ENCODE measurements at regions of chr12 and their contacts with region 1.

Region 1: GRCh38 chr12:56688129-56688845 is at the start of gene PTGES3:
- DNase-seq: peak; percentile 99
- H3K4me3 Mint-ChIP-seq: peak within 1 kb of the TSS; percentile 90
- H3K27ac Mint-ChIP-seq: peak within 1 kb of the TSS; percentile 99
- H3K4me1 Mint-ChIP-seq: peaks cover 19% of the 10 kb centered on the region
- H3K27me3 Mint-ChIP-seq: no peaks in the 10 kb centered on the region
- total RNA-seq, gene PTGES3: 289 to 293 TPM

Region 2: DNA sequence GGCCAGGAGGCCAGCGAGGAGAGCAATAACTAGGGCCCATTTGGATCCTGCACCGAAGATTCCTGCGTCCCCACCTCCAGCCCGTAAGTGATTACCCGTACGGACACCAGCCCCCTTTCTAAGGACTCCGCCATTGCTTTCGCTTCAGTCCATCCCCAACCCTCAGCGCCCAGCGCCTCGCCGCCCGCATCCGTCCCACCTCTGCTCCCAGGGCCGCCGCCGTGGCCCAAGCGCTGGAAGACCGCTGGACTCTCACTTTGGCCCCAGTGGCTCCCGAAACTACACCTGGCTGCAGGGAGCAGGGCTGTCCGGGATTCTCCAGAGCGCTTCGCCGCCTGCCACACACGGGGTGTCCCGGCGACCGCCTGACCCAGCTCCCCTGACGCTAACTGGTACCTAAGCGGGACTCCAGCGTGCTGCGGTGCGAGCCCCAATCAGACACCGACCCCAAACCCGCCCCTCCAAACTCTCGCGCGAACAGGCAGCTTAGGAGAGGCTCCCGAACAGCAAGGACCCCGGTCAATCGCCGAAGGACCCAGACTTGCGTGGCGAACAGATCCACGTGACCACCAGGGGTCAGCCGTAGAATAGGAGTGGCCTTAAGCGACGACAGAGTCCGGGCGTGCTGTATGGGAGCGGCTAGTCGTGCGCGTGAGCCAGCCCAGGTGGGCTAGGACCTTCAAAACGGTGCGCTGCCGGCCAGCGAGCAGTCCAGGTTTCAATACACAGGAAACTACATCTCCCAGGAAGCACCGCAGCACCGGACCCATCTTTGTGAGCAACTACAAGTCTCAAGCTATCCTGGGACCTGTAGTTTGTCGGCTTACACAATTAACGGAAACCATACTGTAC is 372.4 kb before region 1 on chr12 and contains the start of gene CNPY2:
- CTCF ChIA-PET with region 1: no interaction called
- intact Hi-C with region 1: loop called (anchors 1 kb)
- DNase-seq: peak; percentile 92
- H3K4me3 Mint-ChIP-seq: peak within 1 kb of the TSS; percentile 97
- H3K27ac Mint-ChIP-seq: peak within 1 kb of the TSS; percentile 97
- H3K4me1 Mint-ChIP-seq: peaks cover 16% of the 10 kb centered on the region
- H3K27me3 Mint-ChIP-seq: no peaks in the 10 kb centered on the region
- total RNA-seq, gene CNPY2: 47.5 to 57.3 TPM

Region 3: GRCh38 chr12:56636675-56637540 is 51.4 kb before region 1 on chr12:
- CTCF ChIA-PET with region 1: interaction called, 5 read pairs
- intact Hi-C with region 1: loop called (anchors 1 kb)
- DNase-seq: peak; percentile 97
- H3K4me3 Mint-ChIP-seq: peak overlapping the region; percentile 86
- H3K27ac Mint-ChIP-seq: peak overlapping the region; percentile 91
- H3K4me1 Mint-ChIP-seq: peaks cover 62% of the 10 kb centered on the region
- H3K27me3 Mint-ChIP-seq: no peaks in the 10 kb centered on the region

Region 4: GRCh38 chr12:56677680-56678079 is 10.6 kb before region 1 on chr12:
- CTCF ChIA-PET with region 1: no interaction called
- intact Hi-C with region 1: loop called (anchors 1 kb)
- DNase-seq: peak; percentile 51
- H3K4me3 Mint-ChIP-seq: no peak overlapping the region
- H3K27ac Mint-ChIP-seq: peak overlapping the region; percentile 75
- H3K4me1 Mint-ChIP-seq: peaks cover 78% of the 10 kb centered on the region
- H3K27me3 Mint-ChIP-seq: no peaks in the 10 kb centered on the region

Region 5: DNA sequence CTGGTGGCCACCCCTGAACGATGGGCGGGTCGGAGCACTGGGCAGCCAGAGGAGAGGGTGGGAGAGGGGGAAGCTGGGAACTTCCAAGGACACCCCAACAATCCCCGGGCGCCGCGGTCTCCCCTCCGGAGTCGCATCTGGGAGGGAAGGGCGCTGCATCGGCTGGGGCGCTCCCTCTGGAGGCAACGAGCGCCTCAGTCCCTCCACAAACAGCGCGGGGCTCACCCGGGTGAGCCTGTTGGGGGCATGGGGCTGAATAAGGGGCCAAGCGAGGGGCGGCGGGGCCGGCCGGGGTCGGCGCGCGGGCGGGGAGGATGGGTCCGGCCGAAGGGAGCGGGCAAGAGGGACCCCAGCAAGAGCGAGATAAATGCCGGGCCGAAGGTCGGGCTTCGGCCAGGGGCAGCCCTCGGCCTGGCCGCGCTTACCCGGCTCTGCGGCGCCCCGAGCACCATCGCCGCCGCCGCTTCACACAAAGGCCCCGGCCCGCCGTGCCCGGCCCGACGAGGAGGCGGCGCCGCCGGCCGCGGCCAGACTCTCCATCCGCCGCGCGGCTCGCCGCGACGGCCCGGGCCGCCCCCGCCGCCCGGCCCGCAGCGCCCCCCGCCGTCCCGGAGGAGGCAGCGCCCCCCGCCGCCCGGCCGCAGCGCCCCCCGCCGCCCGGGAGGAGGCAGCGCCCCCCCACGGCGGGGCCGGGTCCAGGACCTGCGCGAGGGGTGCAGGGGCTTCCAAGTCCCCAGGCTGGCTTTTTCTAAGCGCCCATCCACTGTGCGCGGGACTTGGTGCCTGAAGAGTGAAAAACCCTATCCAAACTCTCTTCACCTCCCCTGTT is 317.9 kb after region 1 on chr12 and contains the start of gene ZBTB39:
- CTCF ChIA-PET with region 1: interaction called, 3 read pairs
- intact Hi-C with region 1: loop called (anchors 5 kb)
- DNase-seq: peak; percentile 59
- H3K4me3 Mint-ChIP-seq: peak within 1 kb of the TSS; percentile 92
- H3K27ac Mint-ChIP-seq: peak within 1 kb of the TSS; percentile 90
- H3K4me1 Mint-ChIP-seq: peaks cover 72% of the 10 kb centered on the region
- H3K27me3 Mint-ChIP-seq: no peaks in the 10 kb centered on the region
- total RNA-seq, gene ZBTB39: 5.1 to 5.5 TPM

Region 6: GRCh38 chr12:57111031-57111734 is 422.9 kb after region 1 on chr12 and contains the start of gene STAT6:
- CTCF ChIA-PET with region 1: no interaction called
- intact Hi-C with region 1: loop called (anchors 1 kb)
- DNase-seq: peak; percentile 92
- H3K4me3 Mint-ChIP-seq: peak within 1 kb of the TSS; percentile 92
- H3K27ac Mint-ChIP-seq: peak within 1 kb of the TSS; percentile 94
- H3K4me1 Mint-ChIP-seq: peaks cover 45% of the 10 kb centered on the region
- H3K27me3 Mint-ChIP-seq: no peaks in the 10 kb centered on the region
- total RNA-seq, gene STAT6: 188 to 193 TPM

Region 7: GRCh38 chr12:57846577-57847319 is 1158.5 kb after region 1 on chr12 and contains the start of gene CTDSP2:
- CTCF ChIA-PET with region 1: no interaction called
- intact Hi-C with region 1: loop called (anchors 10 kb)
- DNase-seq: peak; percentile 93
- H3K4me3 Mint-ChIP-seq: peak within 1 kb of the TSS; percentile 88
- H3K27ac Mint-ChIP-seq: peak within 1 kb of the TSS; percentile 92
- H3K4me1 Mint-ChIP-seq: peaks cover 44% of the 10 kb centered on the region
- H3K27me3 Mint-ChIP-seq: peaks cover 7% of the 10 kb centered on the region
- total RNA-seq, gene CTDSP2: 94.6 to 99.8 TPM

Measured in activated naive CD4-positive, alpha-beta T cell treated with anti-CD3 and anti-CD28 coated beads for 36 hours (primary cell).